Posterior vena cava (tissue), 2 donors: ENCODE measurements at regions of chr1 and their contacts with region 1.

Region 1: GRCh38 chr1:40951943-40952743 is 27.4 kb upstream of the CTPS1 start:
- DNase-seq: peak; percentile 89

Region 2: GRCh38 chr1:40606978-40607377 is 345.2 kb before region 1 on chr1:
- intact Hi-C with region 1: loop called (anchors 10 kb)
- DNase-seq: no peak

Region 3: DNA sequence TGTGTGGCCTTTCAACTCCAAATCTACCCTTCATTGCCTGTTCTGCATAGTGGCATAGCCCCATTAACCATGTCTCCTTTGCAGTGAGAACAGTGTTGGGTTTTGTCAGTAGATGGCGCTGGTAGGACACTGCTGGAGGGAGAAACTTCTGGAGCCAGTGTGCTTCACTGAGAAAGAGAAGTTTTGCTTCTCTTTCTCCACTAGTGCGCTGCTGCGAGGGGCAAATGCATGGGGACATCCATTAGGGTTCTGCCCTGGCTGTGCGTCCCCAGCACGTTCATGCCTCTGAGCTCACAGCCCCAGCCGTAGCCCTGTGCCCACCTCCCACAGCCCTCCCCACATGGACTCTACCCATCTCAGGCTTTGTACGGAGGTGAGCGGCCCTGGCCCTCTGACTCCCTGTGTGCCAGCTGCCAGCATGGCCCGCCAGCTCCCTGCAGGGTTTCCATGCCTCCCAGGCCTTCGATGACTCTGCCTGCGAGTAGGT is 339.8 kb before region 1 on chr1:
- intact Hi-C with region 1: loop called (anchors 10 kb)
- DNase-seq: no peak

Region 4: DNA sequence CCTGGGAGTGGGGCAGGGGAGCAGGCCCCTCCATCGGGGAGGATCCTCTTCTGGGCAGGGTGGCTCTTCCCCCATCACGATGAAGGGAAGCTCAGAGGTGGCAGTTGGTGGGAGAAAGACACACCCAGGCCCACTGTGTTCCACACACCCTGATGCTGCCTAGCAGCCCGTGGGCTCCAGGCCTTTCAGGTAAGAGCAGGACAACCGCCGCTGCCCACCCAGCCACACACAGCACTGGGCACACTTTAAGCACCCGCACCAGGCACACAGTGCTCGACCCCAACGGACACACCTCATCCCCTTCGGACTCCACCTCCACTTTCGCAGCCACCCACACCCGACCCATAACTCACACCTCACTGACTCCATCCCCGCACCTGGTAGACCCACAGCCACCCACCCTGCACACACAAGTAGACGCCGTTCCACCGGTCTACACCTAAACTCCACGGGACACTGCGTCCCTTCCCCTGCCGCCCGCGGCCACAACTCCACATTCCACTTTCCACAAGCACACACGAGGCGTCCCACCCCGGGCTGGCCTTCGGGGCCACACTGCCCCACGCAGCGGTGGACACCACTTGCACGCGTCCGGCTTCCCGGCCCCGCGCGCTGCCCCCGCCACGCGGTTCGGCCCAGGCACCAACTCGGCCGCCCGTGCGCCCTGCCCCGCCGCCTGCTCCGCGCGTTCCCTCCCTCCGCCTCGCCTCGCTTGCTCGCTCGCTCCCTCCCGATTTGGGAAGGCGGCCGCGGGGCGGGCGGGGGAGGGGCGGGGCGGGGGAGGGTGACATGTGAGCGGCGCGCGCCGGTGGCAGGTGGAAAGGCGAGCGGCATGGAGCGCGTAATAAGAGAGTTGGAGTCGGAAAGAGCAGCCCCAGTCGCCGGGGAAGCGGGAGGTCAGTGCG is 168.9 kb before region 1 on chr1 and contains the start of gene KCNQ4:
- intact Hi-C with region 1: loop called in 1 of 2 experiments (anchors 10 kb)
- DNase-seq: peak; percentile 82
- total RNA-seq, gene KCNQ4: 10.3 to 11.4 TPM

Region 5: DNA sequence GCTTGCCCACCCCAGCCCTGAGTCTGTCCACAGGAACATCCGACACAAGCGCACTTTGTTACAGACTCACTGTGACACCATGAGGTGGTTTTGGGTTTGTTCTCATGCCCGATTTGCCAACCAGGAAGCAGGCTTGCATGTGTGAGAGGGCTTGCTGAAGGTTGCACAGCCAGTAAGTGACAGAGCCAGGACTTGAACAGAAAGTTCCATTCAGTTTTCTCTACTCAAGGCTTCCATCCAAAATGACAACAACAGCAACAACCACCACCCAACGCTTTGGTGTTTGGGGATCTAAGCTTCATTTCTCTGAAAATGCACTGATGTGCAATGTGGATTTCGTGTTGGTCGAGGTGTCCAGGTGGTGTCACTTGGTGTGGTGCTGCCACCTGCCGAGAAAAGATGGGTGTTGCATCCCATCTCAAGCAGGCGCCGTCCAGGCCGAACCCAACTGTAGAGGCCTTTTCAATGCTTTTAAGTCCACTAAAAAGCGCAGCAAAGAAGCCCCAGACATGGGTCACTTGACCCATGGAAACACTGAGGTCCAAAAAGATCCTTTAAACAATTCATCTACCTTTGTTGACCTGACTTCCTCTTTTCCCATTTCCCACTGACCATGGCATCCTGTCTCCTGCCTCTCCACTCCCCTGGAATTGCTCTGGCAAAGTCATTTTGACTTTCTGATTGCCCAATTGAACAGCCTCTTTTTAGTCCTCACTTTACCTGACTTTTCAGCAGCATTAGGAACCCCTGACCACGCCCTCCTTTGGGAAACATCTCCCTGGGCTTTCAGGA is 102.1 kb before region 1 on chr1:
- intact Hi-C with region 1: loop called (anchors 5 kb)
- DNase-seq: peak; percentile 89

Region 6: GRCh38 chr1:40862008-40862863 is 89.9 kb before region 1 on chr1 and contains the start of gene CITED4:
- intact Hi-C with region 1: loop called in 1 of 2 experiments (anchors 1 kb)
- DNase-seq: peak; percentile 98
- total RNA-seq, gene CITED4: 8.3 to 9.5 TPM

Region 7: DNA sequence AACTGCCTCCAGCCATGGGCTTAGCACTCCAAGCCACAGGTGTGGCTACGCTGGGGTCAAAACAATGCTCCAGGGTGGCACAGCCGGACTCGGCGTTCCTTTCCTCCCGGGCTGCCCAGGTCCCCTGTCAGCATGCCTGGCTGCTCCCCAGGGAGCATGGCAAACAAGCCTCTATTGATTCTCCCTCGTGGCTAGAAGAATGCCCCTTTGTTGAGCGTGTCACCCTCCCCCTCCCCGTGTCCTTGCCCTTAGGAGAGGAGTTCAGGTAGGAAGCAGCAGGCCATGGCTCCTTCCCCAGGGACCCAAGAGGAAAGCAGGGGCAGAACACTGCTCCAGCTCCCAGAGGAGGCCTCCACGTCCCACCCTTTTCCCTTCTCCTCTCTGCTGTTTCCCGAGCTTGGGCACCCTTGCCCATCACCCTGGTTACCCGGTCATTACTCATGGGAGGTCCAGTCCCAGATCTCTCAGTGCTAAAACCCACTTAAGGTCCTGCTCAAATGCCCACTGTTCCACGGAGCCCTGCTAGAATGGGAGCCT is 32.6 kb before region 1 on chr1:
- intact Hi-C with region 1: no loop called
- DNase-seq: peak; percentile 35

Region 8: GRCh38 chr1:41038105-41038504 is 86.0 kb after region 1 on chr1:
- intact Hi-C with region 1: no loop called
- DNase-seq: no peak